ENCODE measurements at regions of chr18 and their contacts with region 1.

Region 1: DNA sequence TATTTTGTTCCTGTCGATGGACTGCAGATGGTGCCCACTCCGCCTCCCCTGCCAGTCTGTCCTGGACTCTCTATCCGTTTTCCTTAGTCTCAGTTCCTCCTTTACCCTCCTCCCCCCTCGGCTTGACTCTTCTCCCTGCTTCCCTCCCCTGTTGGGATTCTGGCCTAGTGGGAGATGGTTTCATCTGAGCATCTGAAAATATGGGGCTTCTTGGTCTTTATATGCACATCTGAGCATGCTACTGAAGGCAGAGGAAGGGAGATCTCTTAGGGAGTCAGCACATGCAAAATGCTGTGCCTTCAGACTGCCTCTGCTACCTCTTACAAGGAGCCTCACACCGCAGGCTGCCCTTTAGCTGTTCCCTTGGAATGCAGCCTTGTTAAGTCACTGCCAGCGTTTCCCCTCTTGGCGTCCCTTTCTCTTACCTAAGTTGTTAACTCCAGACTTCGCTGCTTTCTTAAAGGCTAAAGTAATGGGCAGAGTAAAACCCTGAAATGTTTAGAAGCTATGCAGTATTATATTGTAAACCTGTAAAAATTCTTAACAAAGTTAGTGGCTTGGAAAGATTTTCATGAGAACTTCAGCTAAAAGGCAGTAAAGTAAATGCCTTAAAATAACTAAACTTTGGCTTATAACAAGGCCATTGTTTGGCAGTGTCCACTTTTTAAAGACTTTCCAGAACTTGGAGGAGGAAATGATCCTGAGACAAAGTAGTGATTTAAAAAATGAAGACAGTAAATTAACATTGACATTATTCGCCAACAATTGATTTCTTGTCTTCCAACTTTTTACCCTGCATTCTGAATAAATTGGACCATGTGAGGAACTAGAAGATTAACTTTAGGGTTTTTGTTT is 49.8 kb downstream of the LDLRAD4 start:
- DNase-seq: no peak
- ATAC-seq: no peak
- H3K4me3 Mint-ChIP-seq: peak overlapping the region; percentile 2
- H3K27ac Mint-ChIP-seq: peak overlapping the region; percentile 85
- H3K4me1 Mint-ChIP-seq: peaks cover 77% of the 10 kb centered on the region
- H3K27me3 Mint-ChIP-seq: no peaks in the 10 kb centered on the region

Region 2: GRCh38 chr18:12838178-12838634 is 430.2 kb before region 1 on chr18:
- CTCF ChIA-PET with region 1: no interaction called
- POLR2A ChIA-PET with region 1: no interaction called
- intact Hi-C with region 1: loop called in 1 of 2 experiments (anchors 10 kb)
- DNase-seq: peak; percentile 16
- ATAC-seq: no peak
- H3K4me3 Mint-ChIP-seq: peak overlapping the region; percentile 56
- H3K27ac Mint-ChIP-seq: peak overlapping the region; percentile 92
- H3K4me1 Mint-ChIP-seq: peaks cover 64% of the 10 kb centered on the region
- H3K27me3 Mint-ChIP-seq: no peaks in the 10 kb centered on the region

Region 3: GRCh38 chr18:13279181-13280069 is 11.0 kb after region 1 on chr18:
- CTCF ChIA-PET with region 1: interaction called, 6 read pairs
- POLR2A ChIA-PET with region 1: interaction called, 9 read pairs
- intact Hi-C with region 1: loop called in 1 of 2 experiments (anchors 1 kb)
- DNase-seq: peak; percentile 72
- ATAC-seq: peak; percentile 65
- H3K4me3 Mint-ChIP-seq: peak overlapping the region; percentile 62
- H3K27ac Mint-ChIP-seq: peak overlapping the region; percentile 79
- H3K4me1 Mint-ChIP-seq: peaks cover 84% of the 10 kb centered on the region
- H3K27me3 Mint-ChIP-seq: no peaks in the 10 kb centered on the region

Region 4: GRCh38 chr18:13375302-13376255 is 107.2 kb after region 1 on chr18:
- CTCF ChIA-PET with region 1: interaction called, 4 read pairs
- POLR2A ChIA-PET with region 1: interaction called, 19 read pairs
- intact Hi-C with region 1: loop called (anchors 1 kb)
- DNase-seq: peak; percentile 91
- ATAC-seq: peak; percentile 73
- H3K4me3 Mint-ChIP-seq: peak overlapping the region; percentile 63
- H3K27ac Mint-ChIP-seq: peak overlapping the region; percentile 97
- H3K4me1 Mint-ChIP-seq: peaks cover 84% of the 10 kb centered on the region
- H3K27me3 Mint-ChIP-seq: no peaks in the 10 kb centered on the region

Region 5: GRCh38 chr18:13455960-13456471 is 187.6 kb after region 1 on chr18:
- CTCF ChIA-PET with region 1: no interaction called
- POLR2A ChIA-PET with region 1: no interaction called
- intact Hi-C with region 1: loop called in 1 of 2 experiments (anchors 5 kb)
- DNase-seq: peak; percentile 73
- ATAC-seq: peak; percentile 83
- H3K4me3 Mint-ChIP-seq: peak overlapping the region; percentile 31
- H3K27ac Mint-ChIP-seq: peak overlapping the region; percentile 37
- H3K4me1 Mint-ChIP-seq: peaks cover 28% of the 10 kb centered on the region
- H3K27me3 Mint-ChIP-seq: no peaks in the 10 kb centered on the region

Region 6: DNA sequence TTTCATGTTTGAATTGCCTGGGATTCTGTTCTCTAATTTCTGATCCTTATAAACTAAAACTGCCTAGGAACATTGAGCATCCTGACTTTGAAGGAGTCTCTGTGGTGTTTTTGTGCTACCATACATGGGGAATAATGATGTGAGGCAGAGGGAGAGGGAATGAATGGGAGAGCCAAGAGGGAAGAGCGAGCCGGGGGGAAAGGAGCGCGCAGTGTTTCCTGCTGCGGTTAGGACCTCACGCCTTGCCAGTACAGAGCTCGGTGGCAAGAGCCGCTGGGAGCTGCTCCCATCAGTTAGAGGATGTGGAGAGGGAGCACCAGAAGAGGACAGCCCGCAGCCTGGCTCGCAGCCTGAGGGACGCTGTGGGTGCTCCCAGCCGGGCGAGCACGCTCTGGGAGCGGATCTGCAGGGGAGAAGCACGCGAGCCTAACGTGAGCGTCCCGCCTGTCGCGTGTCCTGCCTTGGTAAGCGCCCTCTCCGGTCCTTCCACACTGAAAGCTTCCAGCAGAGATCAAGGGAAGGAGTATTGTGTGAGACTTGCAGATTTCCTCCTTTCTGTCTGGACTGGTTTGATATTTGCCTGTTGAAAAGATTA is 343.3 kb after region 1 on chr18:
- CTCF ChIA-PET with region 1: no interaction called
- POLR2A ChIA-PET with region 1: no interaction called
- intact Hi-C with region 1: loop called (anchors 1 to 5 kb)
- DNase-seq: peak; percentile 46
- ATAC-seq: peak; percentile 4
- H3K4me3 Mint-ChIP-seq: peak overlapping the region; percentile 72
- H3K27ac Mint-ChIP-seq: peak overlapping the region; percentile 87
- H3K4me1 Mint-ChIP-seq: peaks cover 84% of the 10 kb centered on the region
- H3K27me3 Mint-ChIP-seq: no peaks in the 10 kb centered on the region